ENCODE measurements at regions of chr15 and their contacts with region 1.

Region 1: DNA sequence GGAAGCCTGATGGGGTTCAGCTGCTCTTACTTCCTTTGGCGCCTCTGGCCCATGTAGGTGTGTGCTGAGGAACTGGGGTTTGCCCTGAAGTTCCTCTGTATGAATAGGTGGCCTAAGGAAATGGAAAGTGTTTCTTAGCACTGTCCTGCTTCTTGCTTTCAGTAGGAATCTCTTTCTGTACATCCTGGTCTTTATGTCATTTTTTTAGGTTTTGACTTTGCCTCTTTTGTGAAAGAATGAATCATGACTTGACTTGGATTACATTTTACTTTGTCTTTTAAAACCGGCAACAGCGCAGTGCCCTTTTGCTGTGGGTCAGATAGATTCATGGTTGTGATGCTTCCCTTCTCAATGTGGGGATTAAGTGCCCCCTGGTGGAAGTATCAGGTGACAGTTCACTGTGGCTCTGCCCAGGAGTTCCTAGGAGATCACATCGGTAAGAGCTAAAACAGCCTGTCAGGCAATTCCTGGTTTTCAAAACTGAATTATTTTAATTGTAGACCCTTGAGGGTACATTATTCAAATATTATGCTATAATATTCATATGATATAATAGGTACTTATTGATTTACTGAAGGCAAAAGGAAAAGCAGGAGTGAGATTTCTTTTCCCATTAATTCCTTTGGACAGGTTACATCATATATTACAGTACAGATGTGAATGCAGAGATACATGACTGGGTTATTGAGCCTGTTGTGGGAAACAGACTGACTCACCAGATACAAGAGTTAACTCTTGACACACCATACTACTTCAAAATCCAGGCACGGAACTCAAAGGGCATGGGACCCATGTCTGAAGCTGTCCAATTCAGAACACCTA is 95.4 kb downstream of the HCN4 start:
- DNase-seq: peak; percentile 58
- H3K4me3 ChIP-seq: no peak overlapping the region
- H3K27ac ChIP-seq: no peak overlapping the region
- H3K4me1 ChIP-seq: no peaks in the 10 kb centered on the region
- H3K27me3 ChIP-seq: peaks cover 2 to 12% of the 10 kb centered on the region in 2 experiments
- CTCF ChIP-seq: peak; percentile 63 to 65
- POLR2A ChIP-seq: no peak

Region 2: GRCh38 chr15:72487070-72487797 is 786.2 kb before region 1 on chr15:
- CTCF ChIA-PET with region 1: no interaction called
- POLR2A ChIA-PET with region 1: no interaction called
- dilution Hi-C with region 1: no loop called
- intact Hi-C with region 1: no loop called
- DNase-seq: no peak
- H3K4me3 ChIP-seq: no peak overlapping the region
- H3K27ac ChIP-seq: no peak overlapping the region
- H3K4me1 ChIP-seq: peaks cover 7% of the 10 kb centered on the region
- H3K27me3 ChIP-seq: no peaks in the 10 kb centered on the region
- CTCF ChIP-seq: no peak
- POLR2A ChIP-seq: no peak

Region 3: DNA sequence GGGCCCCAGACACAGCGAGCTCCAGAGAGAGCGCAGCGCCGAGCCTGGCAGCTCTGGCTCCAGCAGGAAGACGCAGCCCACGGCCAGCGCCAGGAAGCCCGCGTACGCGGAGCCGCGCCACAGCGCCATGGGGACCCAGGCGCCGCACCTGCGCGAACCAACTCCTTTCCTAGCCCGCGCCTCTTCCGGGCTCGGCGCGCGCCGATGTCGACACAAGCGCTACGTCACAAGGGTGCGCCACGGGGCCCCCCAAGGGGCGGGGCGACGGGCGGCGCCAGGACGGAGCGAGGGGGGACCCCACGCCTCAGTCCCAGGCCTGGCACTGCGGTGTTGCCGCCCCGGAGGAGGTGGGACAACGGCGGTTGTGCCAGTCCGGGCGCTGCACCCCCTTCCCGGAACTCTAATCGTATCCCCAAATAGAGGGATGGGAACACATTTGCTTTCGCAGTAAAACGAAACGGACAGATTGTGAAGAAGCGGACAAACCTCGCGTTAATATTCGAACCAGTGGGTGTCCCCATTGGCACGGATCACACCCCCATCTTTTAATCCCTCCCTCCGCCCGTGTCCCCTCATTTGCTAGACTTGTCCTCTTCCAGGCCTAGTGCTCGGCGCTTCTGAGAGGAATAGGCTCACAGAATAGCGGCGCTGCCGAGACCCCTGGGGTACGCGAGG is 489.7 kb before region 1 on chr15 and contains the start of gene ADPGK:
- CTCF ChIA-PET with region 1: interaction called, 3 read pairs
- POLR2A ChIA-PET with region 1: no interaction called
- dilution Hi-C with region 1: no loop called
- intact Hi-C with region 1: loop called (anchors 2 kb)
- DNase-seq: peak; percentile 94
- H3K4me3 ChIP-seq: peak within 1 kb of the TSS; percentile 49 to 91 (median 61)
- H3K27ac ChIP-seq: peak within 1 kb of the TSS; percentile 61
- H3K4me1 ChIP-seq: peaks cover 10% of the 10 kb centered on the region
- H3K27me3 ChIP-seq: peaks cover 14 to 18% of the 10 kb centered on the region in 2 experiments
- CTCF ChIP-seq: no peak
- POLR2A ChIP-seq: peak; percentile 92
- total RNA-seq, gene ADPGK: 51.0 and 51.7 TPM in 2 replicates

Region 4: DNA sequence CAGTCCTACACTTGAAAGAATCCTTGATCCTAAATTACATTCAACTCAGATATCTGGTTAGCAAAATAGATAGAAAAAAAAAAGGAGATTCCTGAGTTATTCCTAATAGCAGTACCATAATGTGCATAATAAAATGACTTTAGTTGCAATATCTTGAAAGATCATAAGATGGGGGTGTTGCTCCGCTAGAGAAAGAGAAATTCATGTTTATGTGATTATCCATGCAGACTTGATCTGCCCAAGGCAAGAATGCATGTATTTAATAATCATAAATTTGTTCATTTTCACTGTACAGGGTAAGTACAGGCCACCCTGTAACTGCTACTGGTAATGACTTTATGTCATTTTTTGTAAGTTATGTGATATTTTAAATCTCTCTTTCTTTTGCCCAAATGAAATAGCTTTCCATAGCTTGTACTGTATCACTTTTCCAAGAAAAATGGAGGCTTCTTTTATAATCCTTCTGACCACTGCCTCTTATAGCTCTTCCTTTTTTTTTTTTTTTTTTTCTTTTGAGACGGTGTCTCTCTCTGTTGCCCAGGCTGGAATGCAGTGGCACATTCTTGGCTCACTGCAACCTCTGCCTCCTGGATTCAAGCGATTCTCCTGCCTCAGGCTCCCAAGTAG is 10.8 kb after region 1 on chr15:
- CTCF ChIA-PET with region 1: interaction called, 15 read pairs
- POLR2A ChIA-PET with region 1: no interaction called
- dilution Hi-C with region 1: no loop called
- intact Hi-C with region 1: no loop called
- DNase-seq: peak; percentile 35
- H3K4me3 ChIP-seq: no peak overlapping the region
- H3K27ac ChIP-seq: no peak overlapping the region
- H3K4me1 ChIP-seq: no peaks in the 10 kb centered on the region
- H3K27me3 ChIP-seq: no peaks in the 10 kb centered on the region
- CTCF ChIP-seq: peak in 1 of 2 donors; percentile 13
- POLR2A ChIP-seq: no peak